Prostate gland (tissue), 2 donors: ENCODE measurements at regions of chr2 and their contacts with region 1.

Region 1: DNA sequence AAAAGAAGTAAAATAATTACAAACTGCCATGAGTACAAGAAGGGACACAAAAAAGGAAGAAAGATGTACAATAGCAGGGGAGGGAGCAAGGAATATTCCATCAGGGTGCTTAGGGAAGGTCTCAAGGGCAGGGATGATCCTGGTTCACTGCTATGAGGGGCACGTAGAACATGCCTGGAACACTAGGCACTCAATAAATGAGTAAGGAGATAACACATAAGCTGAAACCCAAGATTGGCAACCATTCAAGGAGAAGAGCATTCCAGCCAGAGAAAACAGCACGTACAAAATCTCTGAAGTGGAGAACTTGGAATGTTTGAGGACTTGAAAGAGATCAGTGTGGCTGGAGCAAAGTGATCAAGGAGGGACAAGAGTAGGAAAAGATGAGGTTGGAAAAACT is 103.2 kb downstream of the FAM161A start:
- DNase-seq: no peak
- H3K4me3 ChIP-seq: no peak overlapping the region
- H3K27ac ChIP-seq: no peak overlapping the region
- H3K4me1 ChIP-seq: no peaks in the 10 kb centered on the region
- H3K27me3 ChIP-seq: no peaks in the 10 kb centered on the region
- CTCF ChIP-seq: no peak
- POLR2A ChIP-seq: no peak

Region 2: GRCh38 chr2:61707969-61708852 is 42.4 kb before region 1 on chr2:
- intact Hi-C with region 1: loop called (anchors 5 kb)
- DNase-seq: peak; percentile 60
- H3K4me3 ChIP-seq: no peak overlapping the region
- H3K27ac ChIP-seq: peak overlapping the region; percentile 41 to 83
- H3K4me1 ChIP-seq: peaks cover 5% of the 10 kb centered on the region
- H3K27me3 ChIP-seq: no peaks in the 10 kb centered on the region
- CTCF ChIP-seq: no peak
- POLR2A ChIP-seq: no peak